ENCODE measurements at regions of chr3 and their contacts with region 1.

Region 1: GRCh38 chr3:4943553-4943952 is 35.7 kb upstream of the BHLHE40 start:
- DNase-seq: no peak
- ATAC-seq: no peak
- H3K4me3 Mint-ChIP-seq: no peak overlapping the region
- H3K27ac Mint-ChIP-seq: no peak overlapping the region
- H3K4me1 Mint-ChIP-seq: no peaks in the 10 kb centered on the region
- H3K27me3 Mint-ChIP-seq: no peaks in the 10 kb centered on the region

Region 2: GRCh38 chr3:4044619-4045018 is 898.9 kb before region 1 on chr3:
- CTCF ChIA-PET with region 1: no interaction called
- POLR2A ChIA-PET with region 1: no interaction called
- intact Hi-C with region 1: loop called in 1 of 2 experiments (anchors 5 kb)
- DNase-seq: no peak
- ATAC-seq: no peak
- H3K4me3 Mint-ChIP-seq: no peak overlapping the region
- H3K27ac Mint-ChIP-seq: no peak overlapping the region
- H3K4me1 Mint-ChIP-seq: no peaks in the 10 kb centered on the region
- H3K27me3 Mint-ChIP-seq: no peaks in the 10 kb centered on the region

Region 3: GRCh38 chr3:5162102-5162501 is 218.5 kb after region 1 on chr3:
- CTCF ChIA-PET with region 1: no interaction called
- POLR2A ChIA-PET with region 1: no interaction called
- intact Hi-C with region 1: no loop called
- DNase-seq: no peak
- ATAC-seq: no peak
- H3K4me3 Mint-ChIP-seq: no peak overlapping the region
- H3K27ac Mint-ChIP-seq: no peak overlapping the region
- H3K4me1 Mint-ChIP-seq: peaks cover 68% of the 10 kb centered on the region
- H3K27me3 Mint-ChIP-seq: no peaks in the 10 kb centered on the region

Measured in activated CD4-positive, alpha-beta T cell treated with anti-CD3 and anti-CD28 coated beads for 36 hours (primary cell).